PC-3 (cell line): ENCODE measurements at regions of chr19 and their contacts with region 1.

Region 1: GRCh38 chr19:52922841-52923777 is at the start of gene ZNF888:
- DNase-seq: peak; percentile 83
- ATAC-seq: peak; percentile 96
- H3K4me3 ChIP-seq: peak within 1 kb of the TSS; percentile 74
- H3K27ac ChIP-seq: peak within 1 kb of the TSS; percentile 70
- H3K4me1 ChIP-seq: peaks cover 14% of the 10 kb centered on the region
- H3K27me3 ChIP-seq: no peaks in the 10 kb centered on the region
- CTCF ChIP-seq: no peak
- total RNA-seq, gene ZNF888: 5.2 and 5.4 TPM in 2 replicates

Region 2: DNA sequence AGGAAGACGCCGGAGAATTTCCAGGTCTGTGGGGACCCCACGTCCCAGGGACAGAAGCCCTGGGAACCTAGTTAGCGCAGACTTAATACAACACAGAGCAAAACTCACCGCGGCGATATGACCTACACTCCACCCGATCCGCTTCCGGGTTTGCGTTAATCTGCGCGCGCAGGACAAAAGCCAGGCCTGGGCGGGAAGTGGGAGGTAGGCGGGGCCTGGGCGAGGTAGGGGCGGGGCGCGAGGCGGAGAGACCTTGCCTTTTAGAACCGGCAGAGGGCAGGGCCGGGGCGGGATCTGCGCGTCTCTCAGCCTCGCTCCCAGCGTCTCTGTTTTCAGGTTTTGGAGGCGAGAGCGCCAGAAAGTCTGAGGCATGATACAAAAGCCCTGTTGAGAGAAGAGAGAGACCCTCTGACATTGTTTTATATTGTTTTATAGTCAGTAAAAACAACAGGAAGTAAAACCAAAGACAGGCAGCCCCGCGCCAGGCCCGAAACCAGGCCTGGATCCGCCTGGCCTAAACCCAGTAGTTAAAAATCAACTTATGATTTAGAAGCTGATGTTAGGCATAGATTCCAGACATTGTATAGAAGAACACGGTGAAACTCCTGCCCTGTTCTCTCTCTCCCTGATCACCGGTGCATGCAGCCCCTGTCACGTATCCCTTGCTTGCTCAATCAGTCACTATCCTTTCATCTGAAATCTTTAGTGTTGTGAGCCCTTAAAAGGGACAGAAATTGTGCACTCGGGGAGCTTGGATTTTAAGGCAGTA is 188.0 kb before region 1 on chr19 and contains the start of gene ZNF611:
- CTCF ChIA-PET with region 1: no interaction called
- POLR2A ChIA-PET with region 1: no interaction called
- intact Hi-C with region 1: loop called (anchors 5 kb)
- DNase-seq: peak; percentile 97
- ATAC-seq: peak; percentile 95
- H3K4me3 ChIP-seq: peak within 1 kb of the TSS; percentile 84
- H3K27ac ChIP-seq: peak within 1 kb of the TSS; percentile 44
- H3K4me1 ChIP-seq: peaks cover 9% of the 10 kb centered on the region; the same call in 1 of the 2 replicates
- H3K27me3 ChIP-seq: no peaks in the 10 kb centered on the region
- CTCF ChIP-seq: peak; percentile 52
- total RNA-seq, gene ZNF611: 8.4 and 12.7 TPM in 2 replicates

Region 3: DNA sequence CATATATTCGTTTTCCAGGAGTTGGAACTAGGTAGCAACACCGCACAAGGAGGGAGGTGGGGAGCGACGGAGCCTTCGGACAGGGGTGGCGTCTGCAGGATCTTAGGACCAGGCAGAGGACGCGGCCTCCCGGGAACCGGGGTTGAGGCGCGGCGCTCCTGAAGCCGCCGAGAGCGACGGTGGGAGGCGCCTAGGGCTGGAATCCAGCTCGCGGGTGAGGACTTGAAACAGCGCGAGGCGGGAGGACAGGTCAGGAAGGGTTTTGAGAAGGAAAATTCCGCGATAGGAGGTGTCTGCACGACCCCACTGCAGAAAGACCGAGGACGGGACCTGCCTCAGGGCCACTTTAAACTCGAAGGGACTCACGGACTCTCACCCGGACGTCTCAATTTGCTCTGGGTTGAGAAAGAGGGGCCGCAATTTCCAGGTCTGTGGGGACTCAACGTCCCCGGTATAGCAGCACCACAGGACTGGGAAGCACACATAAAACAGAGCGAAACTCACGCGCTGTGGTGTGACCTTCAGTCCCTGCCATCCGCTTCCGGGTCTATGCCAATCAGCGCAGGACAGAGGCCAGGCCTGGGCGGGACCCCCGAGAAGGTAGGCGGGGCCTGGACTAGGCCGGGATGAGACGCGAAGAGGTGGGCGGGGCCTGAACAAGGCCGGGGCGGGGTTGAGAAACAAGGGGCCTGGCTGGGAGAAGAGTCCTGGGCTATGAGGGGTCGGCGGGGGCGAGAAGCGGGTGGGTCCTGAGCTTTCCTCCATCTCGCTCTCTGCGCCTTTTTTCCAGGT is 25.8 kb before region 1 on chr19 and contains the start of gene ZNF320:
- CTCF ChIA-PET with region 1: no interaction called
- POLR2A ChIA-PET with region 1: no interaction called
- intact Hi-C with region 1: loop called (anchors 2 kb)
- DNase-seq: peak; percentile 95
- ATAC-seq: peak; percentile 100
- H3K4me3 ChIP-seq: peak within 1 kb of the TSS; percentile 87
- H3K27ac ChIP-seq: peak within 1 kb of the TSS; percentile 78
- H3K4me1 ChIP-seq: no peaks in the 10 kb centered on the region
- H3K27me3 ChIP-seq: no peaks in the 10 kb centered on the region
- CTCF ChIP-seq: no peak
- total RNA-seq, gene ZNF320: 7.7 and 10.6 TPM in 2 replicates